ENCODE measurements at regions of chr2 and their contacts with region 1.

Region 1: DNA sequence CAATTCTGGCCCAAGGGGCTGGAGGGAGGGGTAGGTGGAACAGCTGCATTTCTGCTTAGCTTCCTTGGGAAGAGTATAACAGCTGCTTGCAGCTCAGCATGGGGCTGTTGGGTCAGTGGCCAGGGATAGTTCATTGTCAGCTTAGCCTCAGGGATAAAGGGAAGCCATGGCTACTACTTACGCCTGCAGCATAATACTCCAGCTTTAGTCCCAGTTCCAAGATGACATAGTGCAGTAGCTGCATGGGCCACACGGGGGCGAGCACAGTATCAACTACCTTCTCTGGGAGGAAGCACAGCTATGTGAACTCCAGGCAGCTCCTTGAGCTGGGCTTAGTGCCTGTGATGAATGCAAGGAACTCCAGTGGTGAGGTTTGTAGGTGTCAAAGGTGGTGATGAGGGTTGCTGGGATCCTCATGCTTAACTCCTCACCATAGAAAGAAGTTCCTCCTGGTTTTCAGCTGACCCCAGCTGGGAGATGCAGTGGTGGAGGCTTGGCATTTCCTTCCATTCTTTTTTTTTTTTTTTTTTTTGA is 35.4 kb upstream of the RHOB start:
- H3K4me3 ChIP-seq: no peak overlapping the region
- H3K27ac ChIP-seq: no peak overlapping the region
- H3K4me1 ChIP-seq: no peaks in the 10 kb centered on the region
- CTCF ChIP-seq: peak; percentile 45; the same call in 1 of the 2 replicates

Region 2: GRCh38 chr2:20326163-20326780 is 85.2 kb before region 1 on chr2:
- CTCF ChIA-PET with region 1: interaction called, 10 read pairs
- POLR2A ChIA-PET with region 1: no interaction called
- H3K4me3 ChIP-seq: no peak overlapping the region
- H3K27ac ChIP-seq: no peak overlapping the region
- H3K4me1 ChIP-seq: peaks cover 5% of the 10 kb centered on the region; the same call in 1 of the 2 replicates
- CTCF ChIP-seq: peak; percentile 40; the same call in 1 of the 2 replicates

Region 3: GRCh38 chr2:20398956-20399567 is 12.4 kb before region 1 on chr2:
- CTCF ChIA-PET with region 1: interaction called, 24 read pairs
- POLR2A ChIA-PET with region 1: no interaction called
- H3K4me3 ChIP-seq: no peak overlapping the region
- H3K27ac ChIP-seq: no peak overlapping the region
- H3K4me1 ChIP-seq: no peaks in the 10 kb centered on the region
- CTCF ChIP-seq: no peak

Region 4: GRCh38 chr2:20438334-20439192 is 27.1 kb after region 1 on chr2:
- CTCF ChIA-PET with region 1: interaction called, 23 read pairs
- POLR2A ChIA-PET with region 1: interaction called, 7 read pairs
- H3K4me3 ChIP-seq: peak overlapping the region; percentile 2
- H3K27ac ChIP-seq: no peak overlapping the region
- H3K4me1 ChIP-seq: 0 out of 2 replicates have a peak, but pooled peaks cover 2% of the 10 kb centered on the region
- CTCF ChIP-seq: no peak

Region 5: DNA sequence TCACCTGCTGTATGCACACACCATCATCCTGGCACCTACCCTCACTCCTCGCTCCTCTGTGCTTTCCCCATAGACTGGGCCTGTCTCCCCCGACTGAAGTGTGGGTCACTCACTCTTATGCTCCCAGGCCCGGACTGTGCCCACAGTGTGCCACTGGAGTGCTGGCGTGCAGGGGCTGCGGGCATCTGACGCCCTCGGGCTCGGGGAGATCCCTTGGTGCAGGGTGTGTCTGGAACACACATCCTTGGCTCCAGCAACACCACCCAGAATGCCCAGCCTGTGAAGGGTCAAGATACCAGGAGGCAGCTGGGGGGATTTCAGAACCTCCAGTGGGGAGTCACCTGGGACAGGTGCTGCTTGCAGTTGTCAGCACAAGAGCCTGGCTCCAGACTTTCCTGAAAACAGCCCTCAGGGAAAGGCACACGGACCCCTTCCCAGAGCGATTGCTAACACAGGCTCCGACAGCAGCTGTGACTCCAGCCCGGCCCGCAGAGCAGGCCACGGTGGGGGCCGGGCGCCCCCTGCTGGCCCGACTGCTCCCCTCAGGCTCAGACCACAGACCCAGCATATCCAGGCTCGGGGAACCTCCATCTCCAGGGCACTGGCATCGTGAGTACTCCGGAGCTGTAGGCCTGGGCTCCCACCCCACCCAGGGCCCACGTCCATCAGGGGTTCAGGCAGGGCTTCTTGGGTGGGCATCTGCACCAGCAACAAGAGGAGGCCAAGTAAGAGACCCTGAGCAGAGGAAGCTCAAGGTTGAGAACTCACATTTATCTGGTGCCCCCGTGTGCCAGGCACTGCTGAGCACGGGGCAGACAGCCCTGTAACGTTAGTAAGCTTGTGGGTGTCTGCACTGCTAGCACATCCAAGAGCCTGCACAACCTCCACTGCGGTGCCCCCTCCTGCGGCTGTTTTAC is 230.9 kb after region 1 on chr2:
- CTCF ChIA-PET with region 1: interaction called, 48 read pairs
- POLR2A ChIA-PET with region 1: no interaction called
- H3K4me3 ChIP-seq: no peak overlapping the region
- H3K27ac ChIP-seq: no peak overlapping the region
- H3K4me1 ChIP-seq: no peaks in the 10 kb centered on the region
- CTCF ChIP-seq: peak; percentile 88

Measured in HEK293 (cell line).